IMR-90 (cell line): ENCODE measurements at regions of chr3 and their contacts with region 1.

Region 1: DNA sequence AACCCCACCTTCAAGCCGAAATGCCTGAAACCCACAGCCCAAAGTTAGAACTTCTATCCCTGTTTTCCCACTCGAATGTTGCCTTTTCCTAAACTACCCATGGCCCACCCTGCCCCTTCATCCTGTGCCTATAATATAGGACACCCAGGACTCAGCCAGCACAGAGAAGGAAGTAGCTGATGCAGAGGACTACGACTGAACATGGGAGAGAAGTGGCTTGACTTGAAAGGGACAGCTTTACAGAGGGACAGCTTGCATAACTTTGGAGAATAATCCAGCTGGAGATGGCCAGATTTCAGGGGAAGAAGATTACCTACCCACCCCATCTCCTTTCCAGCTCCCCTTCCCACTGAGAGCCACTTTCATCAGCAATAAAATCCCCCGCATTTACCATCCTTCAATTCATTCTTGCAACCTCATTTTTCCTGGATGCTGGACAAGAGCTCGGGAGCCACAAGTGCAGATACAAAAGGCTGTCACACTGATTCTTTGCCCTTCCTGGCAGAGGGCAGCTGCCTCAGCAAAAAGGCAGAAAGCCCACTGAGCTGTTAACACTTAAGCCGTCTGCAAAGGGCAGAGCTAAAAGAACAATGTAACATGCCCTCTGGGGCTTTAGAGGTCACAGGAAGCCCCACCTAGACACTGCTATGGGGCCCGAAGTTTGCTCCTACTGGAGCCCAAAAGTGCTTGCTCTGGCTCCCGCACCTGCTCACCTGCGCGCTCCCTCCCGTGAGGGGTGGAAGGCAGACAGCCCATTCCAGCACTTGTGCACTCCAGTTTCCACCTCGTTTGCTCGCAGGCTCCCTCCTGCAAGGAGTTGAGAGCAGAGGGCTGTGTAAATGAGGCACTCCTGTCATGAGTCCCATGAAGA is 224.0 kb downstream of the TBC1D5 start:
- DNase-seq: no peak
- ATAC-seq: no peak
- H3K4me3 ChIP-seq: no peak overlapping the region
- H3K27ac ChIP-seq: no peak overlapping the region
- H3K4me1 ChIP-seq: peaks cover 5% of the 10 kb centered on the region; the same call in 1 of the 2 replicates
- H3K27me3 ChIP-seq: no peaks in the 10 kb centered on the region
- CTCF ChIP-seq: no peak
- POLR2A ChIP-seq: no peak
- RAD21 ChIP-seq: no peak

Region 2: GRCh38 chr3:16950845-16951244 is 567.6 kb before region 1 on chr3:
- CTCF ChIA-PET with region 1: no interaction called
- POLR2A ChIA-PET with region 1: no interaction called
- dilution Hi-C with region 1: no loop called
- in situ Hi-C with region 1: no loop called
- intact Hi-C with region 1: no loop called
- DNase-seq: no peak
- ATAC-seq: no peak
- H3K4me3 ChIP-seq: no peak overlapping the region
- H3K27ac ChIP-seq: no peak overlapping the region
- H3K4me1 ChIP-seq: no peaks in the 10 kb centered on the region
- H3K27me3 ChIP-seq: no peaks in the 10 kb centered on the region
- CTCF ChIP-seq: no peak
- POLR2A ChIP-seq: no peak
- RAD21 ChIP-seq: no peak

Region 3: GRCh38 chr3:17442332-17443049 is 75.9 kb before region 1 on chr3:
- CTCF ChIA-PET with region 1: no interaction called
- POLR2A ChIA-PET with region 1: no interaction called
- dilution Hi-C with region 1: no loop called
- in situ Hi-C with region 1: no loop called
- intact Hi-C with region 1: no loop called
- DNase-seq: peak; percentile 34
- ATAC-seq: no peak
- H3K4me3 ChIP-seq: no peak overlapping the region
- H3K27ac ChIP-seq: no peak overlapping the region
- H3K4me1 ChIP-seq: no peaks in the 10 kb centered on the region
- H3K27me3 ChIP-seq: no peaks in the 10 kb centered on the region
- CTCF ChIP-seq: no peak
- POLR2A ChIP-seq: no peak
- RAD21 ChIP-seq: no peak

Region 4: GRCh38 chr3:17555525-17555924 is 37.1 kb after region 1 on chr3:
- CTCF ChIA-PET with region 1: no interaction called
- POLR2A ChIA-PET with region 1: no interaction called
- dilution Hi-C with region 1: no loop called
- in situ Hi-C with region 1: no loop called
- intact Hi-C with region 1: loop called (anchors 5 kb)
- DNase-seq: peak; percentile 14
- ATAC-seq: peak; percentile 29; the same call in 1 of the 2 replicates
- H3K4me3 ChIP-seq: no peak overlapping the region
- H3K27ac ChIP-seq: no peak overlapping the region
- H3K4me1 ChIP-seq: peaks cover 1% of the 10 kb centered on the region; the same call in 1 of the 2 replicates
- H3K27me3 ChIP-seq: no peaks in the 10 kb centered on the region
- CTCF ChIP-seq: no peak
- POLR2A ChIP-seq: no peak
- RAD21 ChIP-seq: no peak